Left cardiac atrium (tissue), 4 donors: ENCODE measurements at regions of chr4 and their contacts with region 1.

Region 1: DNA sequence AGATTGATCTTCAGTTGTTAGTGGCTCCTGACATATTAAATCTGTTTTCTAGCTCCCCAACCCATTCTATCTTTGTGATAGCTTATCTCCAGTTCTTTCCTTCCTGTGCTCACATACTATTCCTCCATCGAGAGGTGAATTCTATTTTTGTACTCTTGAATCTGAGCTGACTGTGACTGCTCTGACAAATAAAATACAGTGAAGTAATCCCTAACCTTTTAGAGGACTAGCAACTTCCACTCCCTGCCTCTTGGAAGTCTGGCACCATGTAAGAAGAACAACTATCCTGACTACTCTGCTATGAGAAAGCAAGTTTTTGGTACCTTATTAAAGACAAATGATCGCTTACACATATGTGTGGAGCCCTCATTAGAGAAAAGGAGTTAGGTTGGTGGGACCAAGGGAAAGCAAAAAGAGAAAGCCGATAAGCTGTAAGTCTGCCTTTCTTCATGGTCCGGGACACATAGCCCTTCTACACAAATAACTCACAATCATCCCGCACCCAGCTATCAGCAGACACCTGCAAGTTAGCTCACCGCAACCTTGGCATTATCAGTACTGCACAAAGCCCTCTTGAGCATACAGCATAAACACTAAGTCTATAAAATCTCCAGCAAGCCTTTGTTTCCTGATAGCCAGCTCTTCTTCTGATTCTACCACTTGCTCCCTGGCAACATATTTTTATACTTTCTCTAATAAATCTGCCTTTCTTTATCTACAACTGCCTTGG is 13.5 kb upstream of the PPM1K start:
- DNase-seq: no peak
- ATAC-seq: peak; percentile 66 to 80

Region 2: GRCh38 chr4:88334967-88335665 is 37.2 kb after region 1 on chr4:
- intact Hi-C with region 1: loop called in 1 of 2 experiments (anchors 5 kb)
- DNase-seq: no peak
- ATAC-seq: peak; percentile 41 to 54

Region 3: GRCh38 chr4:88646528-88647280 is 348.8 kb after region 1 on chr4:
- intact Hi-C with region 1: no loop called
- DNase-seq: no peak
- ATAC-seq: no peak